Activated naive CD4-positive, alpha-beta T cell treated with anti-CD3 and anti-CD28 coated beads for 36 hours (primary cell): ENCODE measurements at regions of chr13 and their contacts with region 1.

Region 1: DNA sequence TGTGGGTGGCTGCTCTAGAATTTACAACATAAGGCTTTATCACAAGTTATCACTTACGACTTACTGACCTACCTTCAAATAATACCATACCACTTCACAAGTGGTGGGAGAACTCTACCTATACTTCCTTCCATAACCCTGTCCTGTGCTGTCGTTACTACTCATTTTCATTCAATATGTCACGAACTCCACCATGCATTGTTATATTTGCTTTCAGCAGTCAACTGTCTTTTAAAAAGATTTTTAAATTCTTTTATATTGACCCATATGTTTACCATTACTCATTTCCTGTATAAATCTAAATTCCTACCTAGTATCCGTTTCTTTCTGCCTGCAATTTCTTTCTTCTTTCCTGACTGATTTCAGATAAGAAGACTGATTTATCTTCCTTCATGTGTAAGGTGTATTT is 200.0 kb downstream of the KLF12 start:
- DNase-seq: no peak
- H3K4me3 Mint-ChIP-seq: no peak overlapping the region
- H3K27ac Mint-ChIP-seq: no peak overlapping the region
- H3K4me1 Mint-ChIP-seq: peaks cover 48% of the 10 kb centered on the region
- H3K27me3 Mint-ChIP-seq: no peaks in the 10 kb centered on the region

Region 2: GRCh38 chr13:73228546-73228945 is 705.7 kb before region 1 on chr13:
- CTCF ChIA-PET with region 1: no interaction called
- intact Hi-C with region 1: loop called (anchors 5 kb)
- DNase-seq: peak; percentile 37
- H3K4me3 Mint-ChIP-seq: no peak overlapping the region
- H3K27ac Mint-ChIP-seq: peak overlapping the region; percentile 36
- H3K4me1 Mint-ChIP-seq: peaks cover 42% of the 10 kb centered on the region
- H3K27me3 Mint-ChIP-seq: no peaks in the 10 kb centered on the region

Region 3: DNA sequence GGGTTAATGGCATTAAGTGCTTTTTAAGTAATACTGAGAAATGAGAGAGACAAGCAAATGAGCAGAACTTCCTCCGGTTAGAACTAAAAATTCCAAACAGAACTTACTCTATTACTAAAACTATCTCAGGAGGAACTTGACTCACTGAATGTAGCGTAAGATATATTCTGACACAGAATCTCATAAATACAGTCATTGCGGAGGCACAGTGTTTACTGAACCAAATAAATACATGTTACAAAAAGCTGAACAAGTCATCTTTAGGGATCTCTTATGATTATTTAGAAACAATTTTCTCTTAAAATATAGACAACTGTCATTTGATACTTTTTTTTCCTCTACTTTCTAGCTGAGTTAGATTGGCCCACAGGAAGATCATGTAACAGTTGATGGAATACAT is 83.1 kb before region 1 on chr13:
- CTCF ChIA-PET with region 1: interaction called, 6 read pairs
- intact Hi-C with region 1: loop called (anchors 5 kb)
- DNase-seq: no peak
- H3K4me3 Mint-ChIP-seq: no peak overlapping the region
- H3K27ac Mint-ChIP-seq: no peak overlapping the region
- H3K4me1 Mint-ChIP-seq: peaks cover 29% of the 10 kb centered on the region
- H3K27me3 Mint-ChIP-seq: no peaks in the 10 kb centered on the region

Region 4: DNA sequence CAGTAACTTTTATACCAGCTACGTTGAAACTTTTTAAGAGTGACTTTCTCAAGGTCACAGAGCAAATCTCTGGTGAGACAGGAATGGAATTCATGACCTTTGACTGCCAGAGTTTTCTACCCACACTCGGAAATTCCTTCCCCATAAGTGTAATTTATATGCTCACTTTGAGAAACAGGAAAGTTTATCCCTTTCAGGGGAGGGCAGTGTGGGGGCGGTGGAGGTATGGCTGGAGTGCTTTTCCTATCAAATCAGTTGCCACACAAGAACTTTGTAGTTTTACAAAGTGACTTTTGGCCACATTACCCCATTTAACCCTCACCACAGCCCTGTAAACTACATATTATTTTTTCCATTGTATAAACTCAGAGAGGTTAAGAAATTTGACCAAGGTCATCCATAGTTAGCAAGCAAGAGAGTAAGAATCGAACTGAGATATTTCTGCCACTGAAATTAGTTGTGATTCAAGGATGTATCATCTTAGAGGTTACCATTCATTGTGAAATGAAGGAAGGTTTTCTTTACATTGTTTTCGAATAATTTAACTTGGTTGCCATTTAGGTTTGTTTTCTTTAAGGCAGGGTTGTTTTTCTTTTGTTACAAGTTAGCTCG is 194.0 kb after region 1 on chr13:
- CTCF ChIA-PET with region 1: no interaction called
- intact Hi-C with region 1: no loop called
- DNase-seq: no peak
- H3K4me3 Mint-ChIP-seq: peak overlapping the region; percentile 32
- H3K27ac Mint-ChIP-seq: peak overlapping the region; percentile 61
- H3K4me1 Mint-ChIP-seq: peaks cover 69% of the 10 kb centered on the region
- H3K27me3 Mint-ChIP-seq: no peaks in the 10 kb centered on the region